Natural killer cell (primary cell): ENCODE measurements at regions of chr1 and their contacts with region 1.

Region 1: GRCh38 chr1:24199289-24199900 is 12.3 kb upstream of the IFNLR1 start:
- DNase-seq: peak; percentile 59 to 90
- ATAC-seq: peak; percentile 85 to 91 (median 91)
- H3K4me3 ChIP-seq: no peak overlapping the region
- H3K4me3 Mint-ChIP-seq: no peak overlapping the region
- H3K27ac ChIP-seq: no peak overlapping the region
- H3K27ac Mint-ChIP-seq: no peak overlapping the region
- H3K4me1 ChIP-seq: peaks cover 6% of the 10 kb centered on the region
- H3K4me1 Mint-ChIP-seq: no peaks in the 10 kb centered on the region
- H3K27me3 ChIP-seq: no peaks in the 10 kb centered on the region
- H3K27me3 Mint-ChIP-seq: peaks cover 6 to 9% of the 10 kb centered on the region in 2 donors
- CTCF ChIP-seq: peak; percentile 86

Region 2: GRCh38 chr1:24391882-24392603 is 192.6 kb after region 1 on chr1:
- intact Hi-C with region 1: loop called (anchors 1 kb)
- DNase-seq: peak in 1 of 2 donors; percentile 81
- ATAC-seq: peak; percentile 41 to 66 (median 58)
- H3K4me3 ChIP-seq: no peak overlapping the region
- H3K4me3 Mint-ChIP-seq: peak overlapping the region; percentile 61
- H3K27ac ChIP-seq: peak overlapping the region; percentile 74
- H3K27ac Mint-ChIP-seq: peak overlapping the region; percentile 32 to 73
- H3K4me1 ChIP-seq: peaks cover 8% of the 10 kb centered on the region
- H3K4me1 Mint-ChIP-seq: peaks cover 6 to 8% of the 10 kb centered on the region in 2 donors
- H3K27me3 ChIP-seq: no peaks in the 10 kb centered on the region
- H3K27me3 Mint-ChIP-seq: peaks cover 6 to 37% of the 10 kb centered on the region in 2 donors
- CTCF ChIP-seq: no peak

Region 3: GRCh38 chr1:24438423-24438901 is 239.1 kb after region 1 on chr1:
- intact Hi-C with region 1: no loop called
- DNase-seq: no peak
- ATAC-seq: no peak
- H3K4me3 ChIP-seq: no peak overlapping the region
- H3K4me3 Mint-ChIP-seq: no peak overlapping the region
- H3K27ac ChIP-seq: no peak overlapping the region
- H3K27ac Mint-ChIP-seq: no peak overlapping the region
- H3K4me1 ChIP-seq: no peaks in the 10 kb centered on the region
- H3K4me1 Mint-ChIP-seq: peaks cover 0 to 9% of the 10 kb centered on the region in 2 donors
- H3K27me3 ChIP-seq: no peaks in the 10 kb centered on the region
- H3K27me3 Mint-ChIP-seq: no peaks in the 10 kb centered on the region
- CTCF ChIP-seq: no peak

Region 4: DNA sequence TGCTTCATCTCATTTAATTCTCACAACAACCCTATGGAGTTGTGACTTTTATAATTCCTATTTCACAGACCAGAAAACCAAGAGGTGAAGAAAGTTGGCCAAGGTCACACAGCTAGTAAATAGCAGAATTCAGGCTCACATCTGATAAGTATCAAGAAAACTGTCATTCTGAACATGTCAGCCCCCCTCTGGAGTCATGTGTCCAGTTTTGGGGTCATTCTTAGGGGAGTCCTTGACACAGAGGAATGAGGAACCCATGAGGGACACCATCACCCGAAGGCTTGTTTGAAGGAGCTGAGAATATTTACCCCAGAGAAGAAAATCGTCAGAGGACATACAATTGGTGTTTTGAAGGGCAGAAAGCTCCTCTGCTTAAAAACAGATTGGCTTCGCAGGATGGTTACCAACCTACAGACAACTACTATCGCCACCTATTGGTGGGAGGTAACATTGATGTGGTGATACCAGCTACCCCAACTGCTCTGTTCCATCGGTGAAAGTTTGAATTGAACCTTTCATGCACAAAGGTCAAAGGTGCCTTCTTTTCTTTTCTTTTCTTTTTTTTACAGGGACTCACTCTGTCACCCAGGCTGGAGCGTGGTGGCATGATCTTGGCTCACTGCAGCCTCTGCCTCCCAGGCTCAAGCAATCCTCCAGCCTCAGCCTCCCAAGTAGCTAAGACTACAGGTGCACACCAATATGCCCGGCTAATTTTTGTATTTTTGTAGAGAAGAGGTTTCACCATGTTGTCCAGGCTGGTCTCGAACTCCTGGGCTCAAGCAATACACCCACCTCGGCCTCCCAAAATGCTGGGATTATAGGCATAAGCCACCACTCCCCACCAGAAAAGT is 387.8 kb after region 1 on chr1:
- intact Hi-C with region 1: loop called (anchors 1 kb)
- DNase-seq: peak in 1 of 2 donors; percentile 89
- ATAC-seq: peak; percentile 87 to 99 (median 96)
- H3K4me3 ChIP-seq: no peak overlapping the region
- H3K4me3 Mint-ChIP-seq: no peak overlapping the region
- H3K27ac ChIP-seq: no peak overlapping the region
- H3K27ac Mint-ChIP-seq: no peak overlapping the region
- H3K4me1 ChIP-seq: peaks cover 15% of the 10 kb centered on the region
- H3K4me1 Mint-ChIP-seq: peaks cover 0 to 5% of the 10 kb centered on the region in 2 donors
- H3K27me3 ChIP-seq: no peaks in the 10 kb centered on the region
- H3K27me3 Mint-ChIP-seq: peaks cover 8 to 12% of the 10 kb centered on the region in 2 donors
- CTCF ChIP-seq: peak; percentile 78

Region 5: GRCh38 chr1:24635195-24635843 is 435.9 kb after region 1 on chr1:
- intact Hi-C with region 1: loop called (anchors 1 kb)
- DNase-seq: peak in 1 of 2 donors; percentile 76
- ATAC-seq: peak; percentile 64 to 73 (median 69)
- H3K4me3 ChIP-seq: no peak overlapping the region
- H3K4me3 Mint-ChIP-seq: no peak overlapping the region
- H3K27ac ChIP-seq: no peak overlapping the region
- H3K27ac Mint-ChIP-seq: no peak overlapping the region
- H3K4me1 ChIP-seq: no peaks in the 10 kb centered on the region
- H3K4me1 Mint-ChIP-seq: peaks cover 0 to 4% of the 10 kb centered on the region in 2 donors
- H3K27me3 ChIP-seq: no peaks in the 10 kb centered on the region
- H3K27me3 Mint-ChIP-seq: peaks cover 3 to 11% of the 10 kb centered on the region in 2 donors
- CTCF ChIP-seq: peak; percentile 51

Region 6: DNA sequence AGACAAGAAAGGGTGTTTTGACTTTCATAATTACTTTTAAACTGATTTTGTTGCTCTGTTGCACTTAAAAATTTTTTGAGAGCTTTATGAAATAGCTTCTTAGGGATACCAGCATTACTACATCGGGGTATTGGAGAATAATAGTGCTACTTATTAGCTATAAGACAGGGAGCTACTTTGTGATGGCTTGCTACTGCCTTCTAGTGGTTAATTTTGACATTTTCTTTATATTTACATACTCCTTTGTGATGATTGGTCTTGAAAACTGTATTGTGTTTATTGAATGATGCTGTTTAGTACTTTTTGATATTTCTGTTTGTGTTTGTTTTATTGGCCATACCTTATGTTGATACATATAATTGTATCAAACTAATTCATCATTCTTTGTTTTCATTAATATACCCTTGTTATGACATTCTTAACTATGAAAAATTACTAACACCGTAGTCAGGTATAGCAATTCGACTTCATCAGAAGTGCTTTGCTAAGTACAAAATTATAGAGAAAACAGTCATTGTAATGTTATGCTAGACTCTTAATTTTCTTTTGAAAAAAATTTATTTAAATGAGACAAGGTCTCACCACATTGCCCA is 631.4 kb after region 1 on chr1:
- intact Hi-C with region 1: loop called (anchors 5 kb)
- DNase-seq: peak in 1 of 2 donors; percentile 76
- ATAC-seq: peak; percentile 72 to 75 (median 74)
- H3K4me3 ChIP-seq: no peak overlapping the region
- H3K4me3 Mint-ChIP-seq: no peak overlapping the region
- H3K27ac ChIP-seq: no peak overlapping the region
- H3K27ac Mint-ChIP-seq: no peak overlapping the region
- H3K4me1 ChIP-seq: no peaks in the 10 kb centered on the region
- H3K4me1 Mint-ChIP-seq: peaks cover 0 to 4% of the 10 kb centered on the region in 2 donors
- H3K27me3 ChIP-seq: no peaks in the 10 kb centered on the region
- H3K27me3 Mint-ChIP-seq: peaks cover 0 to 3% of the 10 kb centered on the region in 2 donors
- CTCF ChIP-seq: peak; percentile 93